ENCODE measurements at regions of chr11 and their contacts with region 1.

Region 1: DNA sequence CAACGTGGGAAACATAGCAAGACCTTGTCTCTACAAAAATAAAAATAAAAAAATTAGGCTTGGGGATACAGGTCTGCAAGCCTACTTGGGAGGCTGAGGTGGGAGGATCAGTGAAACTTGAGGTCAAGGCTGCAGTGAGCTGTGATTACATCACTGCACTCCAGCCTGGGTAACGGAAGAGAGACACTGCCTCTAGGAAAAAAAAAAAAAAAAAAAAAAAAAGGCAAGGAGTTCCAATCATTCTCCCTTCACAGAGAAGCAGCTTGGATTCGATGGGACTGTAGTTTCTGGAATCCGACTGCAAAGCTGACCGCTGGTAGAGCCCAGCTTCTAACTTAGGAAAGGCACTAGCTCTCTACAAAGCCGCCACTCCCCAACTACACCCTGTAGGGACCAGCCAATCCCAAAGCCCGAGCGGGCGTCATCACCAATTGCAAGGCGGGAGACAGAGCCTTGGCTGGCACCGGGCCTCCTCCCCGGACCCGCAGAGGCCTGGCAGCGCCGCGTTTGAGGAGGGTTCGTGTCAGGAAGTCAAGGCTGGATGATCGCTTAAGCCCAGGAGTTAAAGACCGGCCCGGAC is 699 bp upstream of the DDB2 start:
- DNase-seq: peak; percentile 92 to 97 (median 96)
- ATAC-seq: peak; percentile 90 to 95 (median 94)
- H3K4me3 ChIP-seq: peak overlapping the region; percentile 9 to 81 (median 68)
- H3K27ac ChIP-seq: peak overlapping the region; percentile 81 to 97 (median 94)
- H3K4me1 ChIP-seq: peaks cover 0 to 39% (median 20%) of the 10 kb centered on the region in 12 donors
- H3K27me3 ChIP-seq: no peaks in the 10 kb centered on the region
- CTCF ChIP-seq: no peak
- POLR2A ChIP-seq: peak in 1 of 2 donors; percentile 80

Region 2: GRCh38 chr11:46755962-46756361 is 458.1 kb before region 1 on chr11:
- intact Hi-C with region 1: no loop called
- DNase-seq: no peak
- ATAC-seq: no peak
- H3K4me3 ChIP-seq: no peak overlapping the region
- H3K27ac ChIP-seq: no peak overlapping the region
- H3K4me1 ChIP-seq: peaks cover 0 to 8% (median 0%) of the 10 kb centered on the region in 12 donors
- H3K27me3 ChIP-seq: no peaks in the 10 kb centered on the region
- CTCF ChIP-seq: no peak
- POLR2A ChIP-seq: no peak

Region 3: DNA sequence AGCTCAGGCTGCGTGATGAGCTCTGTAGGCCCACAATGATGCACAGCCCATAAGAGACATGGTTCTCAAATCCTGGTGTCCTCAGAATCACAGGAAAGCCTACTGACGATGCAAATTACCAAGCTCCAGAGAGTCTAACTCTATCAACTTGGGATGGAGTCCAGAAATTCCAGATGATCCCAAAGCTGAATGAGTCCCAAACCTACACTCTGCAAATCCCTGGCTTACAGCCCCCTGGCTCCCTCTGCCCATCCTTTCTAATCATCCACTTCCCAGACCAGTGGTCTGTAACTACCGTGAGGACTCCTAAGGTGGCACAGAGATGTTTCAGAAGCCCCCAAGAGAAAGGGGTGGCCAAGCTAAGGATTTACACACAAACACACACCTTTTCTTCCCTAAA is 50.9 kb before region 1 on chr11:
- intact Hi-C with region 1: no loop called
- DNase-seq: no peak
- ATAC-seq: no peak
- H3K4me3 ChIP-seq: no peak overlapping the region
- H3K27ac ChIP-seq: no peak overlapping the region
- H3K4me1 ChIP-seq: peaks cover 0 to 30% (median 6%) of the 10 kb centered on the region in 12 donors
- H3K27me3 ChIP-seq: no peaks in the 10 kb centered on the region
- CTCF ChIP-seq: no peak
- POLR2A ChIP-seq: no peak

Region 4: GRCh38 chr11:47186076-47186936 is 27.8 kb before region 1 on chr11 and contains the start of gene PACSIN3:
- intact Hi-C with region 1: loop called in 5 of 10 experiments (anchors 1 to 5 kb)
- DNase-seq: peak; percentile 59 to 80 (median 67)
- ATAC-seq: peak in 2 of 4 donors; percentile 51 to 55
- H3K4me3 ChIP-seq: peak within 1 kb of the TSS; percentile 62 to 95 (median 82)
- H3K27ac ChIP-seq: peak within 1 kb of the TSS; percentile 89 to 100 (median 96)
- H3K4me1 ChIP-seq: peaks cover 0 to 75% (median 28%) of the 10 kb centered on the region in 12 donors
- H3K27me3 ChIP-seq: peaks cover 0 to 43% (median 0%) of the 10 kb centered on the region in 9 donors
- CTCF ChIP-seq: peak in 3 of 12 donors; percentile 13 to 39 (median 15)
- POLR2A ChIP-seq: peak in 1 of 2 donors; percentile 12
- total RNA-seq, gene PACSIN3: 127 to 330 (median 211) TPM

Region 5: DNA sequence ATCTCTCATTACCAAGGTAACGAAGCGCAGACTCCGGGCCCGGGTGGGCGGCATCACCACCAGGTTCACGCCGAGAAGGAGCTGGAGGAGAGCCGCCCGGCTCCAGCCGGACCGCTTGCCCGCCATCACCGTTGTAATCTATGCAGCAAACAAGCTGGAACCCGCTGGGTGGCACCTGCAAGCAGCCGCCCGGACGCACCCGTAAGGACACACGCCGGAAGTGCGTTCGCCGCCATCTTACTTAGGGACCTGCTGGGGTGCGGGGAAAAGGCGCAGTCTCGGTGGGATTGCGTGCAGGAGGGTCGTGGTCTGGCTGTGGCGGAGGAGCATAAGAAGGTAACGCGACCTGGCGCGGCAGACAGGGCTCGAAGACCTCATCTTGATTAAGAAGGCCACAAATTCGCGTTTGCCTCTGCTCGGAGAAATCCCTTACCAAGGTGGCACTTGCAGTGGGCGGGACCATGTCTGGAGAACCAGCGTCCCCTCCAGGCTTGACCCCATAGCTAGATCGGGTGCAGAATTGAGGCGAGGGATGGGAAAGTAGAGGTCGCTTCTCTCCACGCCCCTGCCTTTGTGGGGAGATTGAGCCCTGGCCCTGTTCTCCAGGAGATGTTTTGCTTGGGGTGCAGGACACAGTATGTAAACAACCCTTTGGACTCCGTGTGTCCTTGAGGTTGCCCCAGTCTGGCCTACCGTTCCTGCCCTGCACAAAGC is 34.7 kb after region 1 on chr11 and contains the start of gene ACP2:
- intact Hi-C with region 1: no loop called
- DNase-seq: peak; percentile 88 to 94 (median 89)
- ATAC-seq: peak; percentile 88 to 97 (median 96)
- H3K4me3 ChIP-seq: peak within 1 kb of the TSS; percentile 59 to 93 (median 78)
- H3K27ac ChIP-seq: peak within 1 kb of the TSS; percentile 77 to 94 (median 90)
- H3K4me1 ChIP-seq: peaks cover 2 to 51% (median 24%) of the 10 kb centered on the region in 12 donors
- H3K27me3 ChIP-seq: no peaks in the 10 kb centered on the region
- CTCF ChIP-seq: peak in 3 of 12 donors; percentile 24 to 33 (median 32)
- POLR2A ChIP-seq: peak in 1 of 2 donors; percentile 46
- total RNA-seq, gene ACP2: 18.0 to 60.4 (median 26.6) TPM

Region 6: GRCh38 chr11:47259178-47259977 is 45.3 kb after region 1 on chr11:
- intact Hi-C with region 1: loop called in 1 of 10 experiments (anchors 5 kb)
- DNase-seq: peak in 2 of 5 donors; percentile 54 to 55
- ATAC-seq: peak; percentile 22 to 57 (median 46)
- H3K4me3 ChIP-seq: peak overlapping the region in 6 of 12 donors; percentile 43 to 57 (median 50)
- H3K27ac ChIP-seq: peak overlapping the region in 10 of 12 donors; percentile 9 to 90 (median 82)
- H3K4me1 ChIP-seq: peaks cover 9 to 62% (median 46%) of the 10 kb centered on the region in 12 donors
- H3K27me3 ChIP-seq: no peaks in the 10 kb centered on the region
- CTCF ChIP-seq: peak; percentile 58 to 82 (median 69)
- POLR2A ChIP-seq: no peak

Region 7: DNA sequence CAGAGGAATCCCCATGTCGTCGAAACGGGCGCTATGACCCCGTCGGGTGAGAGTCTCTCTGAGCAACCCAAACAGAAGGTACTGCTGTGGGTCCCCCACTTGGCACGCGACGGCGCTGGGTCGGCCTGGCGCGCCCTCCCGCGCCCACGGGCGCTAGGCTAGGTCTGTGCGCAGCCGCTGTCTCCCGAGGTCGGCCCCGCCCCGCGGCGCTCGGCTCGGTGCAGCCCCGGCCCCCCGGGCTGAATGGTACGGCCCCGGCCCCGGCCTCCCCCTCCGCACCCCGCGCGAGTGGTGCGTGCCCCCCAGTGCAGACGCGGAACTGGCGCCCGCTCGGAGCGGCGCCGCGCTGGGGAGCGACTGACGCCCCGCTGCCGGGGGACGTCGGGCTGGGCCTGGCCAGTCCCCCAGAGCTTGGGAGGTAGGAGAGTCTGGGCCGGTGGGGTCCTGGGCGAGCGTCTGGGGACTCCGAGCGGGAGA is 55.8 kb after region 1 on chr11 and contains the start of gene MADD:
- intact Hi-C with region 1: no loop called
- DNase-seq: peak; percentile 89 to 95 (median 91)
- ATAC-seq: peak; percentile 75 to 94 (median 90)
- H3K4me3 ChIP-seq: peak within 1 kb of the TSS; percentile 44 to 95 (median 84)
- H3K27ac ChIP-seq: peak within 1 kb of the TSS; percentile 92 to 99 (median 98)
- H3K4me1 ChIP-seq: peaks cover 0 to 53% (median 40%) of the 10 kb centered on the region in 12 donors
- H3K27me3 ChIP-seq: no peaks in the 10 kb centered on the region
- CTCF ChIP-seq: peak in 2 of 12 donors; percentile 26 to 31
- POLR2A ChIP-seq: peak in 1 of 2 donors; percentile 66
- total RNA-seq, gene MADD: 30.1 to 60.6 (median 42.0) TPM